Pancreas (tissue), 10 donors: ENCODE measurements at regions of chr14 and their contacts with region 1.

Region 1: GRCh38 chr14:76956316-76957090 is 72.0 kb downstream of the IRF2BPL start:
- DNase-seq: peak; percentile 91 to 95 (median 94)
- ATAC-seq: peak; percentile 87 to 94 (median 91)
- H3K4me3 ChIP-seq: peak overlapping the region in 3 of 4 donors; percentile 4 to 38 (median 31)
- H3K27ac ChIP-seq: peak overlapping the region; percentile 68 to 96 (median 86)
- H3K4me1 ChIP-seq: peaks cover 7 to 42% (median 17%) of the 10 kb centered on the region in 3 donors
- H3K27me3 ChIP-seq: no peaks in the 10 kb centered on the region
- CTCF ChIP-seq: no peak

Region 2: DNA sequence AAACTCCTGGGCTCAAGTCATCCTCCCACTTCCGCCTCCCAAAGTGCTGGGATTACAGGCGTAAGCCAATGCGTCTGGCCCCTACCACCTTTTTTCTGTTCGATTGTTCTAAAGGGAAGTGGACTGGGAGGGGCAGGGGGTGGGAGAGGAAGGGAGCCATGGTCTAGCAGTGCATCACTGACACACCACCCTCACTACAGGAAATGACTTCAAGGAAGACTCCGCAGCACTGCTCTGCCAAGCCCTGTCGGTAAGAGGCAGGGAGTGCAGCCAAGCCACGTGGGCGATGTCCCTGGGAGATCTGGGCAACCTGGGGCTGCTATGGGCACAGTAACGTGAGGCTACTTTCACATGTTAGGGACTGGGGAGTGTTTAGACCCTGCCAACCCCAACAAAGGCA is 112.3 kb before region 1 on chr14:
- intact Hi-C with region 1: no loop called
- DNase-seq: peak; percentile 79 to 84 (median 82)
- ATAC-seq: peak; percentile 97 to 98 (median 98)
- H3K4me3 ChIP-seq: no peak overlapping the region
- H3K27ac ChIP-seq: peak overlapping the region in 2 of 4 donors; percentile 58 to 60
- H3K4me1 ChIP-seq: peaks cover 0 to 13% (median 0%) of the 10 kb centered on the region in 3 donors
- H3K27me3 ChIP-seq: no peaks in the 10 kb centered on the region
- CTCF ChIP-seq: peak in 3 of 4 donors; percentile 21 to 25 (median 23)

Region 3: DNA sequence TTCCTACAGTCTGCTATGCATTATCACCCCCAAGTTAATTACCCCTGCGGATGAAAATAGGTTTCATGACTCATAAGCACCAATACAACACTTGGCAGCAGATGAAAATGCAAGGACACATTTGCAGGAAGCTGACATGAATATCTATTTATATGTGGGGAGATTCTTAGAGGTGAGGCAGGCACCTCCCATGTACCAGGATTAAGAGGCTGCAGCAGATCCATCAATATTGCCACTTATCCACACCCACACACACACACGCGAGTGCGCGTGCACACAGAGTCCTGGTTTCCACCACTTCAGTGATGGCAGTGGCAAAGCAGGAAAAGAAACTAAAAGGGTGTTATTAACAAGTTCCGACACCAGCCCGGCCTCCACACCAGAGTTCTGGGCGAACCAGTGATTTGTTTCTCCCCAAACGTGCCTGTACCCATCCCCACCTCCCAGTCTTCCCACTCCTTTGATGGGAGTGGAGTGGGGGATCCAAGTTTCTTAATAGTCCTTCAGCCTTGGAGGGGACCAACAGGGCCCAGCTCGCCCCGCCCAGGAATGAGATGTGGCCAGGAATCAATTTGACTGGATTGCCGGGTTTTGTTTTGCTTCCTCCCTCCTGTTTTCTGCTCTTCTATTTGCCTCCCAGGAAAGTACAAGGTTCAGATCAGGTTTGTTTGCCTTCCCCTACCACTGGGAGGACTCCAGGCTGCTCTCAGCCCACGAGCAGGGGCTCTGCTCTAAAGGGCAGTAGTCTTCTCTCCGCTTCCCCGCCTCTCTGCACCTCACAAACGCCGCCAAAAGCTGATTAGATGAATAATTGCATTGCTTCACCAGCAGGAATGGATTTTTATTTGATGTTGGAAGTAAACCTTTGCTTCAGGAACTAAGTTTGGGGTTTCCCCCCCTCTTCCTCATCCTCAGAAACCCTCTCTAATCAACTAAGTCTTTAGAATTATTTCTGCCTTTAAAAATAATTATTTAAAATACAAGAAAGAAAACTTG is 66.8 kb after region 1 on chr14:
- intact Hi-C with region 1: loop called in 2 of 3 experiments (anchors 5 to 10 kb)
- DNase-seq: peak in 4 of 6 donors; percentile 76 to 86 (median 79)
- ATAC-seq: peak; percentile 51 to 74 (median 66)
- H3K4me3 ChIP-seq: peak overlapping the region in 3 of 4 donors; percentile 18 to 88 (median 85)
- H3K27ac ChIP-seq: peak overlapping the region; percentile 43 to 100 (median 85)
- H3K4me1 ChIP-seq: peaks cover 14 to 29% (median 24%) of the 10 kb centered on the region in 3 donors
- H3K27me3 ChIP-seq: no peaks in the 10 kb centered on the region
- CTCF ChIP-seq: peak in 2 of 4 donors; percentile 5 to 29

Region 4: GRCh38 chr14:77028384-77029231 is 72.1 kb after region 1 on chr14 and contains the start of gene IRF2BPL:
- intact Hi-C with region 1: loop called in 2 of 3 experiments (anchors 5 to 10 kb)
- DNase-seq: peak; percentile 99 to 100 (median 100)
- ATAC-seq: peak; percentile 48 to 71 (median 60)
- H3K4me3 ChIP-seq: peak within 1 kb of the TSS; percentile 81 to 93 (median 86)
- H3K27ac ChIP-seq: peak within 1 kb of the TSS; percentile 99 to 100 (median 100)
- H3K4me1 ChIP-seq: peaks cover 37 to 49% (median 44%) of the 10 kb centered on the region in 3 donors
- H3K27me3 ChIP-seq: no peaks in the 10 kb centered on the region
- CTCF ChIP-seq: no peak
- total RNA-seq, gene IRF2BPL: 15.4 to 32.2 (median 25.5) TPM

Region 5: DNA sequence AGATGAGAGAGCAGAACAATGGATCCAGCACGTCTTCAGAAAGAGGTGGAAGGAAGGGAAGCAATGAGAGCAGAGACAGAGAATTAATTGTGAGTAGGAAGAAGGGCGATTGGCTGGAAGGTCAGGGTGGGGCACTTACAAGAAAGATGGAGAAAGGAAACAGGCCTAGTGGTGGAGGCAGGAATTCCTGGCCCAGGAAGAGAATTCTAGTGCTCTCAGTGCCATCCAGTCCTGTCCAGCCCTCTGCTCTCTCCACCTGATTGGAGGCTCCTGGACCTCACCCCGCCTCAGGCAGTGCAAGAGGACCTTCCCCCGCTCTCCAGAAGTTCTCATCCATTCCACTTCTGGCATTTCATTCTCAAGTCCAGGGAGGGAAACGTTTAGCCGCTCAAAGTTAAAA is 271.6 kb after region 1 on chr14:
- intact Hi-C with region 1: no loop called
- DNase-seq: no peak
- ATAC-seq: no peak
- H3K4me3 ChIP-seq: no peak overlapping the region
- H3K27ac ChIP-seq: no peak overlapping the region
- H3K4me1 ChIP-seq: no peaks in the 10 kb centered on the region
- H3K27me3 ChIP-seq: no peaks in the 10 kb centered on the region
- CTCF ChIP-seq: no peak